AG04449 (cell line): ENCODE measurements at regions of chr19 and their contacts with region 1.

Region 1: DNA sequence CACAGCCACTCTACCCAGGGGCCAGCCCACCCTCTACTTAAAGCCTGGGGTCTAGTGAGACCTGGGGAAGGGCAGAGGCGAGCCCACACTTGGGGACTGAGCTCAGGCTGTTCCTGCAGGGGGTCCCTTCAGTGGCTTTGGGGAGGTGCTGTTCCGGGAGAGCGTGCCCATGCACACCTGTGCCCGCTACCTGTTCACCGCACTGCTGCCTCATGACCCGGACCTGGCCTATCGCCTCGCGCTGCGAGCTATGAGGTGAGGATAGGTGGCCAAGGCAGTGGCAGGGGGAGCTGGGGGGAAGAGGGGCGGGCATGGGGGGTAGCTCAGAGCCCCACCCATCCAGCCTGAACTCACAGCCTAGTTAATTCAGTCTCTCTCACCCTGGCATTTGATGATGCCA is 24.0 kb downstream of the ZSWIM4 start:
- DNase-seq: no peak
- H3K4me3 ChIP-seq: no peak overlapping the region
- CTCF ChIP-seq: no peak

Region 2: GRCh38 chr19:13707915-13708314 is 111.3 kb before region 1 on chr19:
- CTCF ChIA-PET with region 1: no interaction called
- POLR2A ChIA-PET with region 1: no interaction called
- DNase-seq: no peak
- H3K4me3 ChIP-seq: no peak overlapping the region
- CTCF ChIP-seq: no peak

Region 3: DNA sequence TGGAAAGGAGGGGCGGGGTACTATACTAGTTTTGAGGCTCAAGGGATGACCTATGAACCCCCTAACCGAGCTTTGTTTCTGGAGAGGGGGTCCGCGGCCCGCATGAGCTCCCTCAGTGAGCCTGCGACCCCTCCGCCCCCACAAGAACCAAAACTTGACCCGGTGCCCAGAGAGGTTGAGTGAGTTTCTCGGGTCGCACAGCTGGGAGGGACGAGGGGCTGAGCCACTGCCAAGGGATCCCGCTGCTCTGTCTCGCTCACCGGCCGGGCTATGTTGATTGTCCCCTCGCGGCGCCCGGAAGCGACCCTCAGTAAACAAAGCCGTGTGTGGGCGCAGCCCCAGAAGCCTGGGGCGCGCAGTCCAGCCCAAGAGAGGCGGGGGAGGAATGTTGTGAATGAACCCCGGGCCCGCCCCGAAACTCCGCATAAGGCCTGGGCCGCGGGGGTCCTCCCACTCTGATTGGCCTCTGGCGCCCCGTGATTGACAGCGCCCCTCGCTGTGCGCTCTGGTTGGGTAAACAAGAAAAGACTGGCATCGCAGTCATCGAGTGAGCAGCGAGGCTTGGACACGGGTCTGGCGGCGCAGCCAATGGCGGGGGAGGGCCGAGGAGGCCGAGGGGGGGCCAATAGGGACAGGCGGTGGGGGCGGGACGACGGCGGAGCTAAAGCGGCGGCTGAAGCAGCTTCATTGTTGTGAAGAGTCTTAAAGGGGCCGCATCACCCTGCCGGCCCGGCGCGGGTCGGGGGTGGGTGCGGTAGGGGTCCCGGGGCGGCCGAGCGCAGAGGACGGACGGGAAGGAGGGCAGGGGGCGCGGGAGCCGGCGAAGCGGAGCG is 24.3 kb before region 1 on chr19 and contains the start of gene ZSWIM4:
- CTCF ChIA-PET with region 1: interaction called, 10 read pairs
- POLR2A ChIA-PET with region 1: interaction called, 7 read pairs
- DNase-seq: peak; percentile 95
- H3K4me3 ChIP-seq: peak within 1 kb of the TSS; percentile 94
- CTCF ChIP-seq: no peak